ENCODE measurements at regions of chr16 and their contacts with region 1.

Region 1: GRCh38 chr16:1338119-1338730 is 4.8 kb downstream of the BAIAP3 start:
- DNase-seq: peak; percentile 78
- H3K4me3 ChIP-seq: no peak overlapping the region
- H3K27ac ChIP-seq: no peak overlapping the region
- H3K4me1 ChIP-seq: peaks cover 0 to 20% of the 10 kb centered on the region in 2 experiments; a peak in 1 of 4 replicates
- H3K27me3 ChIP-seq: peaks cover 52% of the 10 kb centered on the region
- CTCF ChIP-seq: peak; percentile 59
- EP300 ChIP-seq: no peak
- RAD21 ChIP-seq: no peak

Region 2: GRCh38 chr16:1237990-1238389 is 100.2 kb before region 1 on chr16:
- CTCF ChIA-PET with region 1: no interaction called
- POLR2A ChIA-PET with region 1: no interaction called
- DNase-seq: no peak
- H3K4me3 ChIP-seq: no peak overlapping the region
- H3K27ac ChIP-seq: no peak overlapping the region
- H3K4me1 ChIP-seq: no peaks in the 10 kb centered on the region; a peak in 1 of 4 replicates
- H3K27me3 ChIP-seq: peaks cover 9% of the 10 kb centered on the region; the same call in 1 of the 2 replicates
- CTCF ChIP-seq: no peak
- EP300 ChIP-seq: no peak
- RAD21 ChIP-seq: no peak

Region 3: GRCh38 chr16:1325673-1326371 is 12.4 kb before region 1 on chr16:
- CTCF ChIA-PET with region 1: interaction called, 14 read pairs
- POLR2A ChIA-PET with region 1: no interaction called
- DNase-seq: no peak
- H3K4me3 ChIP-seq: no peak overlapping the region
- H3K27ac ChIP-seq: no peak overlapping the region
- H3K4me1 ChIP-seq: no peaks in the 10 kb centered on the region
- H3K27me3 ChIP-seq: no peaks in the 10 kb centered on the region
- CTCF ChIP-seq: no peak
- EP300 ChIP-seq: no peak
- RAD21 ChIP-seq: no peak

Region 4: DNA sequence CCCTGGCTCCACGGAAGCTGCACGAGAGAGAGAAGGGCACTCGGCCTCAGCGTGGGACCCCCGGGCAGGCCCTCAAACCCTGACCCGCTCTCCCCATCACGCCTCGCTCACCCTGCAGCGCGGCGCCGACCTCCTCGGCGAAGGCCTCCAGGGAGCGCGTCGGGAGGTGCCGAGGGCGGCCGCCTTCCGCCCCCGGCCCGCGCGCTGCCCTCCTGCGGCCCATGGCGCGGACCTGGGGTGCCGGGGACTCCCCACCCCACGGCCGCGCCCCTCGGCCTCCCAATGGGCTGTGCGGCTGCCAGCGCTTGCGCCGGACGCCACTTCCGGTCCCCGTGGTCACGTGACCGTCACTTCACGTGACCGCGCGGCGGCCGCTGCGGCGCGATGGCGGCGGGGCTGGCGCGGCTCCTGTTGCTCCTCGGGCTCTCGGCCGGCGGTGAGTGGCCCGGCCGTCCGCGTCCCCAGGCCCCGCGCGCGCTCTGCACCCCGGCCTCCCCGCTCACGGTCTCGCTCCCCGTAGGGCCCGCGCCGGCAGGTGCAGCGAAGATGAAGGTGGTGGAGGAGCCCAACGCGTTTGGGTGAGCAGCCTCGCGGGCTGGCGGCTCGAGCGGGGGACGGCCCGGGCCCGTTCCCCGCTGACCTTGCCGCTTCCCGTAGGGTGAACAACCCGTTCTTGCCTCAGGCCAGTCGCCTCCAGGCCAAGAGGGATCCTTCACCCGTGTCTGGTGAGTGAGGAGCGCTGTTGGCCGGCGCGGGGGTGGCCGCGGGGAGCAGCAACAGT is 13.5 kb after region 1 on chr16 and contains the starts of genes GNPTG and TSR3:
- CTCF ChIA-PET with region 1: interaction called, 16 read pairs
- POLR2A ChIA-PET with region 1: no interaction called
- DNase-seq: peak; percentile 96
- H3K4me3 ChIP-seq: peak within 1 kb of the TSS; percentile 98
- H3K27ac ChIP-seq: peak within 1 kb of the TSS in 1 of 2 experiments; percentile 56; a peak in 1 of 4 replicates
- H3K4me1 ChIP-seq: peaks cover 0 to 15% of the 10 kb centered on the region in 2 experiments; a peak in 2 of 4 replicates
- H3K27me3 ChIP-seq: no peaks in the 10 kb centered on the region
- CTCF ChIP-seq: no peak
- EP300 ChIP-seq: no peak; a peak in 1 of 4 replicates
- RAD21 ChIP-seq: no peak
- polyA plus RNA-seq, gene GNPTG: 113 and 114 TPM in 2 replicates
- polyA plus RNA-seq, gene TSR3: 67.6 and 87.3 TPM in 2 replicates

Region 5: DNA sequence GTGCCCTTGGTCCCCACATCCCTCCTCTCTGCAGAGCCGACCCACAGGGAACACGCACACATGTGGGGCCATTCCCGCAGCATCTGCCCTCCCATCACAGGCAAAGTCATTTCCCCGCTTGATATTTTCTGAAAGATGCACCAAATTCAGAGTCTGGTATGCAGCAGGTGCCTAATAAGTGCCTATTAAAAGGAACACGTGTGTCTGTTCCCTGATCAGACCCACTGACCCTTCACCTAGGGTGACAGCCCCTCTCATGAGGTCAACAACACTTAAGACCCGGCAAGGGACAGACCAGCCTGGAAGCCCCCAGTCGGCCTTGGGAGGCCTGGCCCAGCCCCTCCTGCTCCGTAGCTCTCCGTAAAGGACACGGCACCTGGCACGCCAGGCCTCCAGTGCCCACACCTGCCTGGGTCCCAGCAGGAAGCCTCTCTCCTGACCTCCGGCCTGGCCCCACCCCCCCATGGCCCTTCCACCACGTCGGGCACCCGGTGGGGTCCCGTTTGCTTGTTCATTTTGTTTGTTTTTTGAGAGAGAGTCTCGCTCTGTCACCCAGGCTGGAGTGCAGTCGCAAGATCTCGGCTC is 56.2 kb after region 1 on chr16:
- CTCF ChIA-PET with region 1: no interaction called
- POLR2A ChIA-PET with region 1: no interaction called
- DNase-seq: no peak
- H3K4me3 ChIP-seq: no peak overlapping the region
- H3K27ac ChIP-seq: no peak overlapping the region
- H3K4me1 ChIP-seq: no peaks in the 10 kb centered on the region
- H3K27me3 ChIP-seq: no peaks in the 10 kb centered on the region
- CTCF ChIP-seq: no peak
- EP300 ChIP-seq: no peak
- RAD21 ChIP-seq: no peak

Region 6: DNA sequence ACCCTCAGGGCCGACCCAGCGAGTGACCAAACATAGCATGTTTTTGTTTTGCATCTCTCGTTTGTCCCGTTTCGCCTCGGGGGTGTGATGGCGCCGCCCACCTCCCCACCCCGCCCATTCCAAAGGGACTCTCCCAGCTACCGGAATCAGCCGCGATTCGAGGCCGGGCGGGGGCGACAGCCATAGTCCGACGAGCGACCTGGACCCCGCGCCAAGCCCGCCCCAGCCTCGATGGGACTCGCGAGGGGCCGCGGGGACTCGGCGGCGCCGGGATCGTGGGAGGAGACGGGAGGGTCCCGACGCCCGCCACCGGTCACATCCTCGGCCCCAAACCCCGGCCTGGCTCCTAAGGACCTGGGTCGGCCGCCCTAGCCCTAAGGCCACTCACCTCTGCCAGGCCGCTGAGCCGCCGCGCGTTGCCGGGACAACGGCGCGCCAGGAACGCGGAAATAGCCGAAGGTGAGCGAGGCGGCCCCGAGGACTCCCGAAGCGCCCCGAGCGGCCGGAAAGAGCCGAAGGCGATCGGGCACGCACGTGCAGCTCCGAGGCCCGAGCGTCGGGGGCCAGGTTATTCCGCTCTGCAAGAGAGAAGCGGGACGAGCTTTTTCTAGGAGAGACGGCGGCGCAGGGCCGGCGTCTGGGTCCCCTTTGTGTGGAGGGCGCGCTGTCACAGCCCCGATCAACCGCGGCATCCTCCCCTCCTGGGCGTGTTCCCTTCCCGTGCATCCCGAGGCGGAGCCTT is 272.2 kb after region 1 on chr16:
- CTCF ChIA-PET with region 1: no interaction called
- POLR2A ChIA-PET with region 1: no interaction called
- DNase-seq: peak; percentile 92
- H3K4me3 ChIP-seq: peak overlapping the region; percentile 69 to 88
- H3K27ac ChIP-seq: peak overlapping the region; percentile 81
- H3K4me1 ChIP-seq: peaks cover 8 to 29% of the 10 kb centered on the region in 2 experiments; a peak in 2 of 4 replicates
- H3K27me3 ChIP-seq: no peaks in the 10 kb centered on the region
- CTCF ChIP-seq: no peak
- EP300 ChIP-seq: no peak
- RAD21 ChIP-seq: no peak